Prostate gland (tissue), 2 donors: ENCODE measurements at regions of chr11 and their contacts with region 1.

Region 1: DNA sequence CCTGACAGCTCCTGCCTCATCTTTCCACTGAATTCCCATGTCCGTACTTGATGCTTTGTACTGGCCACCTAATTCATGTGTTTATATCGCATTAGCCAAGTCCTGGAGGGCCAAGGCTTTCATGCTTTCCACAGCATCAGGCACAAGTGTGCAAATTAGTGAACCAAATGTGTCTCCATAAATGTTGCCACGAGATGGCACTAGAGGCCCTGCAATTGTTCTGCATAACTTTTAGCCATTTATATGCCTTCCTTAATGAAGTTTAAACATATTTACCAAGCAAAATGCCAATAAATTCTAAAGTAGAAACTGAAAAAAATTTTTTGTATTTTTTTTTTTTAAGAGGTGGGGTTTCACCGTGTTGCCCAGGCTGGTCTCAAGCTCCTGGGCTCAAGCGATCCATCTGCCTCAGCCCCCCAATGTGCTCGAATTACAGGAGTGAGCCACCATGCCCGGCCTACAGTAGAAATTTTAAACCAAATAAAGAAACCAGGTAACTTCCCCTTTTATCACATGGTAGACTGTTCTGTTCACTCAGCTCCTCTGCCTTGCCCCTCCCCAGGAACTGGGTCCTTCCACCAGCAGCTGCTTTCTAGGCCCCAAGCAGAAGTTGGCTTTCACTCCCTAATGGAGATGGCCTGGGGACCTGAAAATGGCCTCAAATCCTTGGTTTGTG is 20.8 kb upstream of the IL18BP start:
- DNase-seq: peak; percentile 52
- H3K4me3 ChIP-seq: no peak overlapping the region
- H3K27ac ChIP-seq: no peak overlapping the region
- H3K4me1 ChIP-seq: no peaks in the 10 kb centered on the region
- H3K27me3 ChIP-seq: no peaks in the 10 kb centered on the region
- CTCF ChIP-seq: peak in 3 of 4 experiments; percentile 66 to 81 (median 81)
- POLR2A ChIP-seq: no peak

Region 2: DNA sequence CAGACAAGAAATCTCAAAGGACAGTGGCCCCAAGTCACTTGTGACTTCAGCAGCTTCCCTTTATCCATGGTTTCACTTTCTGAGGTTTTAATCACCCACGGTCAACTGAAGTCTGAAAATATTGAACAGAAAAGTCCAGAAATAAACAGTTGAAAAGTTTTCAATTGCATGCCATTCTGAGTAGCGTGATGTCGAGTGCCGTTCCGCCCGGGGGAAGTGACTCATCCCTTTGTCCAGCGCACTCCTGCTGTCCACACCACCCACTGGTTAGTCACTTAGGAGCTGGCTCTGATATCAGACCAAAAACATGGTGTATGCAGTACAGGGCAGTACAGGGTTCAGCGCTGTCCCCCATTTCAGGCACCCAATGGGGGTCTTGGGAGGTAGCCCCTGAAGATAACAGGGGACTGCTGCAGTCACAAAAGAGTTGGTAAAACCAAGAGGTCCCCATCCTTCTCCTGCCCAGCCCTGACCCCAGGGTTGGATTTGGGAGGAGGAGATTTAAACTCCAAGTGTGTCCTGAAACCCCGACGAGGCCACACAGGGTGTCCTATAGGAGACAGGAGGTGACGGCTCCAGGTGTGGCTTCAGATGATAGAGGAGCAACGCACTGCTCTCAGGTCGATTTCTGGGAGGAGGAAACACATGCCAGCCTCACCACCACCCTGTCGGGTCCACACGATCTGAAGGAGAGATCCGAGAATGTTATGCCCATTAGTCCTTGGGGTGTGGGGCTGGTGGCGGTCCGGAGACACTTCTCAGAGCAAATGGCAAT is 1189.4 kb before region 1 on chr11:
- intact Hi-C with region 1: no loop called
- DNase-seq: no peak
- H3K4me3 ChIP-seq: no peak overlapping the region
- H3K27ac ChIP-seq: no peak overlapping the region
- H3K4me1 ChIP-seq: no peaks in the 10 kb centered on the region
- H3K27me3 ChIP-seq: no peaks in the 10 kb centered on the region
- CTCF ChIP-seq: no peak
- POLR2A ChIP-seq: no peak

Region 3: GRCh38 chr11:72015511-72016171 is 37.8 kb after region 1 on chr11:
- intact Hi-C with region 1: loop called (anchors 2 kb)
- DNase-seq: no peak
- H3K4me3 ChIP-seq: no peak overlapping the region
- H3K27ac ChIP-seq: no peak overlapping the region
- H3K4me1 ChIP-seq: peaks cover 17% of the 10 kb centered on the region
- H3K27me3 ChIP-seq: no peaks in the 10 kb centered on the region
- CTCF ChIP-seq: peak in 2 of 4 experiments; percentile 15 to 19
- POLR2A ChIP-seq: no peak

Region 4: GRCh38 chr11:72085621-72086351 is 107.9 kb after region 1 on chr11:
- intact Hi-C with region 1: loop called (anchors 5 kb)
- DNase-seq: no peak
- H3K4me3 ChIP-seq: no peak overlapping the region
- H3K27ac ChIP-seq: peak overlapping the region; percentile 21 to 50
- H3K4me1 ChIP-seq: peaks cover 23% of the 10 kb centered on the region
- H3K27me3 ChIP-seq: no peaks in the 10 kb centered on the region
- CTCF ChIP-seq: no peak
- POLR2A ChIP-seq: no peak

Region 5: DNA sequence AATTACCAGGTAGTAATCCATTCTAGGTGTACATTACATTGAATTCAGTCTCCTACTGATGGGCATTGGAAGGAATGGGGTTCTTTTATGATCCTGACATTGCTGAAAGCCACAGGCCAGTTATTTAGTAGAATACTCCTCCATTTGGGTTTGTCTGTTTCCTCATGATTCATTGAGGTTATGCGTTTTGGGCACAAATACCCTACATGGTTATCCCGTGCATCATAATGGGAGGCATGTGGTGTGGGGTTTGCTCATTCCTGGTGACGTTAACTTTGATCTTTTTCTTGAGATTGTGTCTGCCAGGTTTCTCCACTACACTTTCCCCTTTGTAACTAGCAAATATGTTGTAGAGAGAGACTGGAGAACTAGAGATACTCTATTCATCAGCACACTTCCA is 163.2 kb after region 1 on chr11:
- intact Hi-C with region 1: loop called (anchors 5 kb)
- DNase-seq: no peak
- H3K4me3 ChIP-seq: no peak overlapping the region
- H3K27ac ChIP-seq: no peak overlapping the region
- H3K4me1 ChIP-seq: no peaks in the 10 kb centered on the region
- H3K27me3 ChIP-seq: no peaks in the 10 kb centered on the region
- CTCF ChIP-seq: no peak
- POLR2A ChIP-seq: no peak